BJ (cell line): ENCODE measurements at regions of chrX and their contacts with region 1.

Region 1: GRCh38 chrX:119617517-119618164 is 11.4 kb upstream of the NKRF start:
- DNase-seq: no peak
- H3K4me3 ChIP-seq: no peak overlapping the region
- H3K27me3 ChIP-seq: no peaks in the 10 kb centered on the region
- CTCF ChIP-seq: no peak

Region 2: GRCh38 chrX:119211649-119212014 is 406.0 kb before region 1 on chrX:
- CTCF ChIA-PET with region 1: no interaction called
- POLR2A ChIA-PET with region 1: no interaction called
- DNase-seq: no peak
- H3K4me3 ChIP-seq: no peak overlapping the region
- H3K27me3 ChIP-seq: peaks cover 5% of the 10 kb centered on the region; the same call in 1 of the 2 replicates
- CTCF ChIP-seq: no peak

Region 3: DNA sequence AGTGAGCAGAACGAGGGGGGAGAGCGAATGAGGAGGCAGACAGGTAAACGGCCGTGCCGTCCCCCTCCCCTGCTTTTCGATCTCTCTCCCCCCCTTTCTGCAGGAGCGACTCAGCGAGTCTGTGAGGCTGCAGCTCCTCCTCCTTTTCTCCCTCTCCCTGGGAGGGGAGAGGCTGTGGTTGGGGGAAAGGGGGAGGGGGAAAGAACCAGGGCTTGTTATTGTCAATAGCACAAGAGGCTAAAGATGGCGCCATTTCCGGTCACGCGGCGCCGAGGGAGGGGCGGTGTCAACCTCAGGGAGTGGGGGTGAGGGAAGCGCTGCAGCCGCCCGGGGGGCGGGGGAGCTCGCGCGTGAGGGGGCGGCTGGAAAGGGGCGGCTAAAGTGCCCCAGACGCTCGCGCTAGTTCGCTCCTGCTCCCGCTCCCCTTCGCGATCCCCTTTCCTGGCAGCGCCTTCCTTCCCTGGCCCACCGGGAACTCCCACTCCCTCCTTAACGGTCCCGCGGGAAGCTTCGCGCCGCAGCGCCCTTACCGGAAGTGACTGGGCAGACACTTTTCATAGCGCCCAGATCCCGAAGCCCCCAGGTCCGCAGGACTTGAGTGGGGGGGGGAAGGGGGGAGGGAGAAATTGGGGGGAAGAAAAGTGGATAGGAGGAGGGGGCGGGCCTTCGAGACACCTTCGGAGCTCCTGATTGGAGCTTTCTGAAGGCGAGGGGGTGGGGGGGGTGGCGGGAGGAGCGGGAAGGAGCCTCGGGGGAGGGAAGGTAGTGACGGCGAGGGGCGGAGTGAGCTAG is 943.4 kb after region 1 on chrX and contains the start of gene CUL4B:
- CTCF ChIA-PET with region 1: no interaction called
- POLR2A ChIA-PET with region 1: interaction called, 10 read pairs
- DNase-seq: peak; percentile 82
- H3K4me3 ChIP-seq: peak within 1 kb of the TSS; percentile 62
- H3K27me3 ChIP-seq: no peaks in the 10 kb centered on the region
- CTCF ChIP-seq: no peak
- polyA plus RNA-seq, gene CUL4B: 107 and 114 TPM in 2 replicates